HEK293 (cell line): ENCODE measurements at regions of chr14 and their contacts with region 1.

Region 1: GRCh38 chr14:88168498-88169165 is 154.4 kb downstream of the KCNK10 start:
- H3K4me3 ChIP-seq: no peak overlapping the region
- H3K27ac ChIP-seq: no peak overlapping the region
- H3K4me1 ChIP-seq: no peaks in the 10 kb centered on the region
- CTCF ChIP-seq: no peak

Region 2: GRCh38 chr14:87944987-87945604 is 223.5 kb before region 1 on chr14:
- CTCF ChIA-PET with region 1: interaction called, 24 read pairs
- POLR2A ChIA-PET with region 1: no interaction called
- H3K4me3 ChIP-seq: no peak overlapping the region
- H3K27ac ChIP-seq: no peak overlapping the region
- H3K4me1 ChIP-seq: no peaks in the 10 kb centered on the region
- CTCF ChIP-seq: no peak

Region 3: DNA sequence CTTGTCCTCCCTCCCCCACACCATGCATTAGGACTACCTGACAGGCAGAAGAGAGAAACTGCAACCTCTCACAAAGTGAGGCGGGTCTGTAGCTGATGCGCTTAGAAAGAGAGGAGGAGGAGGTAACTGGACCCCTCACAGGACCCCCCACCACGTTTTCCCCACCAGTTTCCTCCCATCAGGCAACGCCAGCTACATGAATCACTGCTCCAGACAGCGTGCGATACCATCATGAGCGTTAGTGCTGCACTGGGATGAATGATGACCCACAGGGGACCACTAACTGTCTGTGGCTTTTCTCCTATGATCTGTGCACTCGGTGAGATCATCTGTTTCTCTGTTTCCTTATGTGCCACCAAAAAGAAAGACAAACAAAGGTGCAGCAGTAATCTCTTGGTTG is 76.7 kb after region 1 on chr14:
- CTCF ChIA-PET with region 1: no interaction called
- POLR2A ChIA-PET with region 1: no interaction called
- H3K4me3 ChIP-seq: no peak overlapping the region
- H3K27ac ChIP-seq: no peak overlapping the region
- H3K4me1 ChIP-seq: peaks cover 7% of the 10 kb centered on the region
- CTCF ChIP-seq: no peak

Region 4: GRCh38 chr14:88551094-88551870 is 382.6 kb after region 1 on chr14:
- CTCF ChIA-PET with region 1: no interaction called
- POLR2A ChIA-PET with region 1: no interaction called
- H3K4me3 ChIP-seq: peak overlapping the region; percentile 65
- H3K27ac ChIP-seq: peak overlapping the region; percentile 46; the same call in 1 of the 2 replicates
- H3K4me1 ChIP-seq: peaks cover 10% of the 10 kb centered on the region
- CTCF ChIP-seq: peak; percentile 56; the same call in 1 of the 2 replicates